ENCODE measurements at regions of chr5 and their contacts with region 1.

Region 1: DNA sequence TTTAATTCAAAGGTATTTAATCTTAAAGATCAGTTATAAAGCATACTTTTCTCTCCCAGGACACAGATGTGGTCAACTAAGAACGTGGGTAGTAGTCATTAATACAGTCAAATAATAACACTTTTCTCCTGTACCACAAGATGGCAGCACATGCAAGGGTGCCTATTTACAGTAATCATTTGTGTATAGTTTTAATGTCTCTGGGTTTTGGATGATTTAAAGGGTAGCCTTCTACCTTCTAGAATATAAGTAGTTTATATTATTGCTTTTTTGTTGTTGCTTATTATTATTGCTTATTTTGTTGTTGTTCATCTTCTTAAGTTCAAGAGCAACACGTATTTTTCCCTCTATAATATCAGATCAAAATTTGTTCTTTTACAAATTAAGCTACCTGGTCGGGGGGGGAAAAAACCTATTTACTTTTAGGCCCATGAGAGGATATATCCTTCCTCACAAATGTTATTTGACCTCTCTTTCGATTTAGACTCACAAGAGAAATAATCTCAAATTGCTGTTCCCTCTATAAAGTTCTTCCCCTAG is 59.6 kb upstream of the SLC27A6 start:
- DNase-seq: no peak
- H3K4me3 Mint-ChIP-seq: no peak overlapping the region
- H3K27ac Mint-ChIP-seq: no peak overlapping the region
- H3K4me1 Mint-ChIP-seq: no peaks in the 10 kb centered on the region
- H3K27me3 Mint-ChIP-seq: no peaks in the 10 kb centered on the region

Region 2: GRCh38 chr5:127856292-127856691 is 1049.3 kb before region 1 on chr5:
- intact Hi-C with region 1: no loop called
- DNase-seq: no peak
- H3K4me3 Mint-ChIP-seq: no peak overlapping the region
- H3K27ac Mint-ChIP-seq: no peak overlapping the region
- H3K4me1 Mint-ChIP-seq: peaks cover 8% of the 10 kb centered on the region
- H3K27me3 Mint-ChIP-seq: no peaks in the 10 kb centered on the region

Region 3: GRCh38 chr5:129125810-129126209 is 220.2 kb after region 1 on chr5:
- intact Hi-C with region 1: loop called (anchors 1 kb)
- DNase-seq: no peak
- H3K4me3 Mint-ChIP-seq: peak overlapping the region; percentile 61
- H3K27ac Mint-ChIP-seq: peak overlapping the region; percentile 73
- H3K4me1 Mint-ChIP-seq: peaks cover 15% of the 10 kb centered on the region
- H3K27me3 Mint-ChIP-seq: no peaks in the 10 kb centered on the region

Region 4: GRCh38 chr5:129135633-129136032 is 230.0 kb after region 1 on chr5:
- intact Hi-C with region 1: loop called (anchors 2 kb)
- DNase-seq: no peak
- H3K4me3 Mint-ChIP-seq: no peak overlapping the region
- H3K27ac Mint-ChIP-seq: no peak overlapping the region
- H3K4me1 Mint-ChIP-seq: no peaks in the 10 kb centered on the region
- H3K27me3 Mint-ChIP-seq: peaks cover 7% of the 10 kb centered on the region